ENCODE measurements at regions of chr16 and their contacts with region 1.

Region 1: GRCh38 chr16:22055878-22056277 is 36.5 kb upstream of the VWA3A start:
- DNase-seq: no peak
- H3K4me3 Mint-ChIP-seq: no peak overlapping the region
- H3K27ac Mint-ChIP-seq: no peak overlapping the region
- H3K4me1 Mint-ChIP-seq: peaks cover 31% of the 10 kb centered on the region
- H3K27me3 Mint-ChIP-seq: no peaks in the 10 kb centered on the region

Region 2: GRCh38 chr16:22007509-22008214 is 48.2 kb before region 1 on chr16 and contains the start of gene MOSMO:
- intact Hi-C with region 1: loop called (anchors 5 kb)
- DNase-seq: peak; percentile 46
- H3K4me3 Mint-ChIP-seq: peak within 1 kb of the TSS; percentile 89
- H3K27ac Mint-ChIP-seq: peak within 1 kb of the TSS; percentile 69
- H3K4me1 Mint-ChIP-seq: peaks cover 32% of the 10 kb centered on the region
- H3K27me3 Mint-ChIP-seq: peaks cover 14% of the 10 kb centered on the region
- total RNA-seq, gene MOSMO: 11.4 and 12.0 TPM in 2 replicates

Measured in activated T-helper 2 cell treated with anti-CD3 and anti-CD28 coated beads, Interferon-gamma antibody, Interleukin-2, Interleukin-4, amounts not matched to agents 10 μg/mL and 5 μg/mL and 100 μg/mL, durations not matched to agents 14 hours and 24 hours and 36 hours (primary cell).